Adrenal gland (tissue), 19 donors: ENCODE measurements at regions of chr2 and their contacts with region 1.

Region 1: DNA sequence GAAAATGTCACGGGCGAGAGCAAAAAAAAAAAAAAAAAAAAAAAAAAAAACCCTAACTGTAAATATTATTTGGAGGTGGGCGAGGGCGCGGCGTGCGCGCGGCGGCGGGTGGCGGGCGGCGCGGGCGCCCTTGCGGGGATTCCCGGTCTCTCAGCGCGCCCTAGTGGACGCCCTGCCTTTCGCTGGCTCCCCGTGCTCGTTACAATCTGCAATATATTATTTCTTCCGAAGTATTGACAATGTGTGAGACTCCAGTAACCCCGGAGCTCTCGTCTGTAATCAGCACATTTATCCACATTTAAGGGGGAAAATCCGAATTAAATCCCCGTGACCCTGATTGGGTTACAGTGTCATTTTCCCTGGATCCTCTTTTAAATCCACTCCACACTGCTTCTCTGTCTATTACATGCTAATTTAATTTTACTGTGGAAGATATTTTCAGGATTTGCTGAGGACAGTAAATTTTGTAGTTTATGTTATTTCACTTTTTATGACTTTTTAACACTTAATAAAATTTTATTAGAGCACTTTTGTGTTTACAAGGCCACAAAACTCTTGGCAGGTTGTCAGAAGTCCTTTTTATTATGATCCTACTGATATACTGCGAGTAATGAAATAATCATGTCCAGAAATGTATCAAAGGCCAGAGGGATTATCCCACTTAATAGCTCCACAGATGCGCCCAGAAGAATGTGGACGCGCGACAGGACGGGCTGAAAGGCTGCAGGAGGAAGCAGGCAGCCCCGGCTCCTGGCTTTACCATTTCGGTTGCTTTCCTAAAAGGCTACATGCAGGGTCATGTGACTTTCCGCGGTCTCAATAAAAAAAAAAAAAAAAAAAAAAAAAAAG is 369.1 kb downstream of the MTX2 start:
- DNase-seq: peak; percentile 67 to 88 (median 74)
- H3K4me3 ChIP-seq: peak overlapping the region in 2 of 4 donors; percentile 64 to 69
- H3K27ac ChIP-seq: peak overlapping the region in 2 of 5 donors; percentile 73 to 80
- H3K4me1 ChIP-seq: peaks cover 0 to 4% of the 10 kb centered on the region in 2 donors
- H3K27me3 ChIP-seq: no peaks in the 10 kb centered on the region
- CTCF ChIP-seq: peak; percentile 30 to 89 (median 63)
- POLR2A ChIP-seq: no peak

Region 2: DNA sequence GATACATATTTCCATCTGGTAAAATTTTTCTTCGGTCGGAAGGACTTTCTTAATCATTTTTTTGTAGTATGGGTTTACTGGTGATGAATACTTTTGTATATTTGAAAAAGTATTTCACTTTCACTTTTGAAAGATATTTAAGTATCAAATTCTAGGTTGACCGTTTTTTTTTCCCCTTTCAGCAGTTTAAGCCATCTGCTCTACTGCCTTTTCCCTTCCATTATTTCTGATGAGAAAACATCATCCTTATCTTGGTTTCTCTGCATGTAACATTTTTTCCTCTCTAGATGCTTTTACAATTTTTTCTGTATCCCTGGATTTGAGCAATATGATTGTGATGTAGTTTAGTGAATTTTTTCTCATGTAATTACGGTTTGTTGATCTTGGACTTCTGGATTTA is 282.1 kb before region 1 on chr2:
- intact Hi-C with region 1: no loop called
- DNase-seq: no peak
- H3K4me3 ChIP-seq: no peak overlapping the region
- H3K27ac ChIP-seq: no peak overlapping the region
- H3K4me1 ChIP-seq: no peaks in the 10 kb centered on the region
- H3K27me3 ChIP-seq: no peaks in the 10 kb centered on the region
- CTCF ChIP-seq: no peak
- POLR2A ChIP-seq: no peak

Region 3: GRCh38 chr2:176491172-176491904 is 147.1 kb before region 1 on chr2:
- intact Hi-C with region 1: no loop called
- DNase-seq: no peak
- H3K4me3 ChIP-seq: no peak overlapping the region
- H3K27ac ChIP-seq: peak overlapping the region in 1 of 5 donors; percentile 60
- H3K4me1 ChIP-seq: peaks cover 0 to 11% of the 10 kb centered on the region in 2 donors
- H3K27me3 ChIP-seq: peaks cover 7% of the 10 kb centered on the region
- CTCF ChIP-seq: no peak
- POLR2A ChIP-seq: no peak

Region 4: GRCh38 chr2:176565641-176566323 is 72.6 kb before region 1 on chr2:
- intact Hi-C with region 1: loop called in 1 of 2 experiments (anchors 10 kb)
- DNase-seq: peak in 2 of 7 donors; percentile 17 to 62
- H3K4me3 ChIP-seq: no peak overlapping the region
- H3K27ac ChIP-seq: no peak overlapping the region
- H3K4me1 ChIP-seq: no peaks in the 10 kb centered on the region
- H3K27me3 ChIP-seq: no peaks in the 10 kb centered on the region
- CTCF ChIP-seq: no peak
- POLR2A ChIP-seq: no peak

Region 5: GRCh38 chr2:176582990-176583481 is 55.4 kb before region 1 on chr2:
- intact Hi-C with region 1: no loop called
- DNase-seq: peak; percentile 36 to 76 (median 52)
- H3K4me3 ChIP-seq: no peak overlapping the region
- H3K27ac ChIP-seq: no peak overlapping the region
- H3K4me1 ChIP-seq: peaks cover 0 to 21% of the 10 kb centered on the region in 2 donors
- H3K27me3 ChIP-seq: no peaks in the 10 kb centered on the region
- CTCF ChIP-seq: no peak
- POLR2A ChIP-seq: no peak

Region 6: DNA sequence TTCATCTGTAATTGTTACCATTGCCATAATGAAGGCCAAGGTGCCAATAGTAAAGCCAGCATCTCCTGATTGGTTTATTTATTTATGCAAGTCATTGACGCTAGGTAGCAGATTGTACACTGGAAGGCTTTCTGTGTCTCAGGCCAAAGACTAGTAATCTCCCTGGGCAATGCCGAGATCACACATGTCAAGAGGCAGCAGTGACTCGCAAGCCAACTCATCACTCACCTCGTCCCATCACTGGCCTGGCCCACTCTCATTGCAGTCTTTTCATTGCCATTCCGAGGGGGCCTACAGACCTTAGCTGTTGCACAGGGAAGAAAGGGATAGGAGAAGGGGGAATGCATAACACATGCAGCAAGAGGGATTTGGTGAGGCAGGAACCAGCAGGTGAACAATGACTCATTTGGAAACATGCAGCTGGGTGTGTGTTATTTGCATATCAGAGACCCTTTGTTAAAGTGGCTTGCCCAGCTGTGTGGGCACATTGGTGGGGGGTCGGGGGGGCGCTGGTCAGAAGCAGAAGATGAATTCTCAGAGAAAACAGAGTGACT is 125.5 kb after region 1 on chr2:
- intact Hi-C with region 1: no loop called
- DNase-seq: no peak
- H3K4me3 ChIP-seq: no peak overlapping the region
- H3K27ac ChIP-seq: no peak overlapping the region
- H3K4me1 ChIP-seq: no peaks in the 10 kb centered on the region
- H3K27me3 ChIP-seq: no peaks in the 10 kb centered on the region
- CTCF ChIP-seq: no peak
- POLR2A ChIP-seq: no peak